GM12878 (cell line): ENCODE measurements at regions of chr2 and their contacts with region 1.

Region 1: GRCh38 chr2:222318026-222318711 is 19.4 kb upstream of the PAX3 start:
- DNase-seq: no peak
- ATAC-seq: peak; percentile 82
- H3K4me3 ChIP-seq: peak overlapping the region; percentile 74
- H3K27ac ChIP-seq: no peak overlapping the region
- H3K4me1 ChIP-seq: no peaks in the 10 kb centered on the region
- H3K27me3 ChIP-seq: peaks cover 0 to 2% of the 10 kb centered on the region in 2 experiments; a peak in 2 of 4 replicates
- CTCF ChIP-seq: peak; percentile 35 to 80 (median 66); a peak in 5 of 6 replicates
- EP300 ChIP-seq: no peak
- POLR2A ChIP-seq: no peak
- RAD21 ChIP-seq: peak; percentile 87

Region 2: GRCh38 chr2:222024932-222025880 is 293.0 kb before region 1 on chr2:
- CTCF ChIA-PET with region 1: interaction called, 11 read pairs
- POLR2A ChIA-PET with region 1: no interaction called
- RAD21 ChIA-PET with region 1: no interaction called
- SMC1A ChIA-PET with region 1: interaction called, 6 read pairs
- in situ Hi-C with region 1: no loop called
- intact Hi-C with region 1: no loop called
- DNase-seq: no peak
- ATAC-seq: peak; percentile 52; the same call in 1 of the 3 replicates
- H3K4me3 ChIP-seq: no peak overlapping the region; the same call in 1 of the 2 replicates
- H3K27ac ChIP-seq: no peak overlapping the region
- H3K4me1 ChIP-seq: no peaks in the 10 kb centered on the region
- H3K27me3 ChIP-seq: no peaks in the 10 kb centered on the region; a peak in 1 of 4 replicates
- CTCF ChIP-seq: peak; percentile 53 to 59 (median 56)
- EP300 ChIP-seq: no peak
- POLR2A ChIP-seq: no peak
- RAD21 ChIP-seq: peak; percentile 49

Region 3: DNA sequence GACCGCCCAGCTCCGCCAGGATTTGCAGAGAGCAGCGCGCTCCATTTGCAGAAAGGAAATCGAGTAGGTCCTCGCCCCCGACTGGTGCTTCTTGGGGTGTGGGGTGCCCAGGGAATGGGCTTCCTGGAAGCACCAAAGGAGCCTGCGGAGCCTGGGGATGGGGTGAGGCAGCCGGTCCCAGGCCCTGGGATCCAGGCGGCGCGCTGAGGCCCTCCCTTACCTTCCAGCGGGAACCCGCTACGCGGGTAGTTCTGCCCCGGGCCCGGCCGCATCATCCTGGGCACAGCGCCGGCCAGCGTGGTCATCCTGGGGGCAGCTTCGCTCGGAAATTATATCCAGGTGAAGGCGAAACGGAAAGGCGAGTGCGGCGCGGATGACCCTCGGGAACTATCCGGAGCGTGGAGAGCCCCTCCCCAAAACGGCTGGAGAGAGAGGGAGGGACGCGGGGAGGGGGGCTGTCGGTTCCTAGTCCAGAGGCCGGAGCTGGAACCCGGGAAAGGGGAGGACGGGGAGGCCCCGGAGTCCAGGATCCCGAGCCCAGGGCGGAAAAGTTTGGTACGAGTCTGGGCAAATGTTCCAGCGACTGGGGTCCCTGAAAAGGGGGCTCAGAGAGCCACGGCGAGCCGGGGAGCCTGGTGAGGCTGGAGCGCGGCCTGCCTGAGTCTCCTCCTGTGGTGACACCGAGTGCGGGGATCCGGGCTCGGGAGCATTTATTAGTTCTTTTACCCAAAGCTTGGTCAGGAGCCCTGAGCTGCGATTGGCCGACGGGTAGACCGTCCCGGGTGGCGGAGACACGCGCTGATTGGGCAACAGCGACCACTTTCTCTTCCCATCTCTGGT is 19.6 kb before region 1 on chr2 and contains the start of gene PAX3:
- CTCF ChIA-PET with region 1: no interaction called
- POLR2A ChIA-PET with region 1: no interaction called
- RAD21 ChIA-PET with region 1: no interaction called
- SMC1A ChIA-PET with region 1: no interaction called
- in situ Hi-C with region 1: no loop called
- intact Hi-C with region 1: no loop called
- DNase-seq: no peak
- ATAC-seq: no peak
- H3K4me3 ChIP-seq: no peak within 1 kb of the TSS
- H3K27ac ChIP-seq: no peak within 1 kb of the TSS
- H3K4me1 ChIP-seq: no peaks in the 10 kb centered on the region
- H3K27me3 ChIP-seq: peaks cover 39 to 71% of the 10 kb centered on the region in 2 experiments
- CTCF ChIP-seq: no peak
- EP300 ChIP-seq: no peak
- POLR2A ChIP-seq: no peak
- RAD21 ChIP-seq: no peak
- polyA plus RNA-seq, gene PAX3: not detected

Region 4: GRCh38 chr2:222451224-222451674 is 133.1 kb after region 1 on chr2:
- CTCF ChIA-PET with region 1: interaction called, 39 read pairs
- POLR2A ChIA-PET with region 1: interaction called, 5 read pairs
- RAD21 ChIA-PET with region 1: interaction called, 20 read pairs
- SMC1A ChIA-PET with region 1: interaction called, 16 read pairs
- in situ Hi-C with region 1: no loop called
- intact Hi-C with region 1: loop called (anchors 1 kb)
- DNase-seq: peak; percentile 77
- ATAC-seq: peak; percentile 100
- H3K4me3 ChIP-seq: no peak overlapping the region
- H3K27ac ChIP-seq: no peak overlapping the region
- H3K4me1 ChIP-seq: peaks cover 9% of the 10 kb centered on the region
- H3K27me3 ChIP-seq: no peaks in the 10 kb centered on the region
- CTCF ChIP-seq: peak; percentile 23 to 57 (median 42); a peak in 5 of 6 replicates
- EP300 ChIP-seq: peak; percentile 62 to 66; a peak in 2 of 4 replicates
- POLR2A ChIP-seq: no peak
- RAD21 ChIP-seq: peak; percentile 54

Region 5: DNA sequence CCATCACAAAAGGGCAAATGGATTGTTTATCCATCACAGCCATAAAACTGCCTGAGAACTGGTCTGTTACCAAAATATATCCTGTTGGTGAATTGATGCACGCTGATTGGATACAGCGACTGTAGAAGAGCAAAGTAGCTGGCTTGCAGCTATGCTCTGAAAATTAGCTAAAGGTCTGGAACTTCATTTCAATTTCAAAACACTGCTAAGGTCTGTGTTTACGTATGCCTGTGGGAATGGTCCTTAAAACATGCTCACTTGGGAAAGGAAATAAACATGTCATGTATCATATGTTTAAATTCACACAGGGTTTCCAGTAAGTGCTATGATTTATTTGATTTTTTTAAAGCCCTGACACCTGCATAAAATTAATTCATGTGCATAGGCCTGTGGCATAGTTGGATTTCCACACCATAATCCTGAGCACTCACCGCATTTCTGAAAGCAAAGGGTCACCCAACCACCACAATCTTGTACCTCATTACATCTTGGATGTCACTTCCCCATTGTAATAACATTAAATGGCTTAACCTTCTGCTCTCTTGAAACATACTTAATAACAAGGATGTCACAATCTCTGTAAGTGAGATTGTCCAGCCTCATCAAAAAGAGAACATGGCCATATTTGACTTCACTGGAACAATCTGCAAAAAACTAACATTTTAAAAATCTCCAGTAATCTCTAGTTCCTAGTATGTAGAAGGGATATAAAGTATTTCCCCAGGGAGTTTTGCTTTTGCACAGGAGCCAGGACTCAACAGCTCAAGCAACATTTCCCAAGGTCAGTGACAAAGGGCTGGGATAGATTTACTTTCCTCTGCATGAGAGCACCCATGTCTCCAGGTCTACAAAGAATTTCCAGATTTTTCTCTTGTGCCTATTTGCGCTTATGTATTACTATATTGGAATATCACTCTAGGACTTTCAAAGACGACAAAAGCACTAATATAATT is 227.9 kb after region 1 on chr2:
- CTCF ChIA-PET with region 1: interaction called, 13 read pairs
- POLR2A ChIA-PET with region 1: no interaction called
- RAD21 ChIA-PET with region 1: interaction called, 7 read pairs
- SMC1A ChIA-PET with region 1: interaction called, 12 read pairs
- in situ Hi-C with region 1: no loop called
- intact Hi-C with region 1: no loop called
- DNase-seq: no peak
- ATAC-seq: no peak
- H3K4me3 ChIP-seq: no peak overlapping the region
- H3K27ac ChIP-seq: no peak overlapping the region
- H3K4me1 ChIP-seq: no peaks in the 10 kb centered on the region
- H3K27me3 ChIP-seq: no peaks in the 10 kb centered on the region
- CTCF ChIP-seq: no peak
- EP300 ChIP-seq: no peak
- POLR2A ChIP-seq: no peak
- RAD21 ChIP-seq: no peak

Region 6: DNA sequence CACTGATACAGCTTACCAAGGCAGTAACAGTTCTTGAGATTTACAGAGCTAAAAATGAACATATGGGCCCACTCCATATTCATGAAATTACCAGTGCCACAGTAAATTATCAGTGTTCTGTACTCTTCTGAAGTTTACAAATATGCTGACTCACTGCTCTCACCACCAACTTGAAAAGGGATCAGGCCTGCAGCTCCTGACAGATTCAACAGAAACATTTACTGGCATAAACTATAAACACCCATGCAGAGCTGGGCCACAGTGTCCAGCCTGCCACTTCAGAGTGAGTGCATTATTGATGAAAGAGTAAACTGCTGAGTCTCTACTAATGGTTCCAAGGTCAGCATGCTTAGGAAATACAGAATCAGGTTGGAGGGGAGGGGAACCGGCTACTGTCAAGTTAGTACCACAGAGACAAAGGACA is 254.6 kb after region 1 on chr2:
- CTCF ChIA-PET with region 1: interaction called, 15 read pairs
- POLR2A ChIA-PET with region 1: interaction called, 3 read pairs
- RAD21 ChIA-PET with region 1: interaction called, 6 read pairs
- SMC1A ChIA-PET with region 1: interaction called, 7 read pairs
- in situ Hi-C with region 1: no loop called
- intact Hi-C with region 1: no loop called
- DNase-seq: no peak
- ATAC-seq: no peak
- H3K4me3 ChIP-seq: no peak overlapping the region
- H3K27ac ChIP-seq: no peak overlapping the region
- H3K4me1 ChIP-seq: no peaks in the 10 kb centered on the region
- H3K27me3 ChIP-seq: no peaks in the 10 kb centered on the region
- CTCF ChIP-seq: no peak
- EP300 ChIP-seq: no peak
- POLR2A ChIP-seq: no peak
- RAD21 ChIP-seq: no peak

Region 7: GRCh38 chr2:222604749-222605515 is 286.8 kb after region 1 on chr2:
- CTCF ChIA-PET with region 1: interaction called, 36 read pairs
- POLR2A ChIA-PET with region 1: no interaction called
- RAD21 ChIA-PET with region 1: interaction called, 6 read pairs
- SMC1A ChIA-PET with region 1: interaction called, 11 read pairs
- in situ Hi-C with region 1: no loop called
- intact Hi-C with region 1: no loop called
- DNase-seq: no peak
- ATAC-seq: no peak
- H3K4me3 ChIP-seq: no peak overlapping the region
- H3K27ac ChIP-seq: no peak overlapping the region
- H3K4me1 ChIP-seq: no peaks in the 10 kb centered on the region
- H3K27me3 ChIP-seq: no peaks in the 10 kb centered on the region
- CTCF ChIP-seq: no peak
- EP300 ChIP-seq: no peak
- POLR2A ChIP-seq: no peak
- RAD21 ChIP-seq: no peak